ENCODE measurements at regions of chr3 and their contacts with region 1.

Region 1: DNA sequence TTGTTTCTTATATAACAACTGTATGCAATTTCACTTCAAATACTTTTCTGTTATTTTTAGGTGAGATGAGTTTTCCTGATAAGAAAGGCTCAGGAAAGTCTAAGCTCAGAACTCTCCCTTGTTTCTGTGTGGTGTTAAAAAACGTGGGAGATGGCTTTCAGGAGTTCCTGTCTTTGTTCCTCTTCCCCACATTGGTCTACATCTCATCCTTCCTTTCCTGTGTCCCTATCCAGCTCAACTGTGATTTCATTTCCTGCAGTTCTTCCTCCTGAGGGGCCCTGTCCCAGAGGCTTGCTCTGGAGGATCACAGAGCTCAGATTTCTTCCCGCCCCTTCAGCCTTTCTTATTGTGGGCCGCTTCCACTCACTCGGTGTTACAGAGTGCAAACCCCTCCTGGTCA is 11.2 kb downstream of the SEC13 start:
- DNase-seq: no peak
- H3K4me3 ChIP-seq: no peak overlapping the region
- H3K27ac ChIP-seq: no peak overlapping the region
- H3K4me1 ChIP-seq: no peaks in the 10 kb centered on the region
- H3K27me3 ChIP-seq: no peaks in the 10 kb centered on the region
- CTCF ChIP-seq: no peak
- EP300 ChIP-seq: no peak
- POLR2A ChIP-seq: no peak
- RAD21 ChIP-seq: no peak

Region 2: DNA sequence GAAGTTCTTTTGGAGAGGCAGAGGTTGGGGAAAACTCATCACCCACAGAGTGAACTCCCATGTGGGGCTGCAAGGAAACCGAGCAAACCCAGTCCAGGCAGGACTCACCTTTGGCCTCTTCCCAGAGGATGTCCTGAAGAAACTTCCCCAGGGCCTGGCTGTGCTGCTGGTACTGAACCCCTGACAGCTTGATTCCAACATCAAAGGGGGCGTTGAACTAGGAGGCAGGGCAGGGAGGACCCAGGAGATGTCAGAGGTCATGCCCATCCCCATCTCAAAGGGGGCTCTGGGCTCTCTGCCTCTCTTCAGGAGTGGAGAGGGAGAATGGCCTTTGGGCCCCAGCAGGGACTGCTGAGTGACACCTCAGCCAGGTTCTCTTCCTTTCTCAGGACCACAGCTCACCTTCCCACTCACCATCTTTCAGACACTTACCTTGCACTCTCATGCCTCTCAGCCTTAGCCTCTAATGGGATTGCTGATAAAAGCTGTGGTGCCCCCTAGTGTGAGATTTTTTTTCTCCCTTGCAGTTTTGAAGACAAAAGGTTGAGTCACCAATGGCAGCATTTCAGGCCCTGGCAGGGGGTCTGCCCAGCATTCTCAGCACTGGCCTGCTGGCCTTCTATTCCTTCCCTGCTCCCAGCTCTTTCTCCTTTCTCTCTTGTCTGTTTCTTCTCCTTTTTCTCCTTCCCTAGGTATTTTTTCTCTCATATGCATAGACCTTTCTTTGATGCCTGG is 23.0 kb before region 1 on chr3:
- CTCF ChIA-PET with region 1: interaction called, 11 read pairs
- POLR2A ChIA-PET with region 1: interaction called, 7 read pairs
- DNase-seq: peak; percentile 57 to 75
- H3K4me3 ChIP-seq: no peak overlapping the region
- H3K27ac ChIP-seq: no peak overlapping the region
- H3K4me1 ChIP-seq: peaks cover 0 to 7% (median 4%) of the 10 kb centered on the region in 4 experiments; a peak in 6 of 7 replicates
- H3K27me3 ChIP-seq: no peaks in the 10 kb centered on the region
- CTCF ChIP-seq: peak in 2 of 3 experiments; percentile 40 to 53; a peak in 3 of 4 replicates
- EP300 ChIP-seq: no peak
- POLR2A ChIP-seq: no peak
- RAD21 ChIP-seq: peak; percentile 60 to 63

Region 3: DNA sequence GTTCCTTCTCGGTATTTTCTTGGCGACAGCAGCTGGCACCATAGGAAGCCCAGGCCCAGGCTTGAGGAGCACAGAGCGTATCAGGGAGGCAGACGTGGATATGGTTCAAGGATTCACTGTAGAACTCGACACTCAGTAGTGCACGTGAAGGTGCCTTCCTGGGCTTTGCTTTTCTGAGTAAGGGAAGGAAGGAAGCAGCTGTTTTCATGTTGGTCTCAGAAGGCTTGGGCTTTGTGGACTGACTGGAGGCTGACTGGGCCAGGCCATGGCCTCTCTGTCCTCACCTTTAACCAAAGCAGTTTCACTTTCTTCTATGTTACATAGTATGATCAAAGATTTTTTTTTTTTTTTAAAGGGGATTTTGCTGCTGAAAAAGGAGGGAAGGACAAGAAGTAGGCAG is 10.1 kb before region 1 on chr3:
- CTCF ChIA-PET with region 1: interaction called, 6 read pairs
- POLR2A ChIA-PET with region 1: interaction called, 10 read pairs
- DNase-seq: no peak
- H3K4me3 ChIP-seq: no peak overlapping the region
- H3K27ac ChIP-seq: no peak overlapping the region
- H3K4me1 ChIP-seq: no peaks in the 10 kb centered on the region
- H3K27me3 ChIP-seq: no peaks in the 10 kb centered on the region
- CTCF ChIP-seq: no peak
- EP300 ChIP-seq: no peak
- POLR2A ChIP-seq: no peak
- RAD21 ChIP-seq: no peak

Region 4: GRCh38 chr3:10322352-10322710 is 12.6 kb after region 1 on chr3:
- CTCF ChIA-PET with region 1: interaction called, 5 read pairs
- POLR2A ChIA-PET with region 1: interaction called, 20 read pairs
- DNase-seq: no peak
- H3K4me3 ChIP-seq: no peak overlapping the region
- H3K27ac ChIP-seq: no peak overlapping the region
- H3K4me1 ChIP-seq: peaks cover 0 to 4% (median 3%) of the 10 kb centered on the region in 4 experiments; a peak in 5 of 7 replicates
- H3K27me3 ChIP-seq: peaks cover 0 to 4% (median 0%) of the 10 kb centered on the region in 4 experiments; a peak in 2 of 7 replicates
- CTCF ChIP-seq: peak in 2 of 3 experiments; percentile 48 to 57; a peak in 3 of 4 replicates
- EP300 ChIP-seq: no peak
- POLR2A ChIP-seq: no peak
- RAD21 ChIP-seq: peak; percentile 49 to 57